Lower lobe of right lung (tissue), 2 donors: ENCODE measurements at regions of chr4 and their contacts with region 1.

Region 1: DNA sequence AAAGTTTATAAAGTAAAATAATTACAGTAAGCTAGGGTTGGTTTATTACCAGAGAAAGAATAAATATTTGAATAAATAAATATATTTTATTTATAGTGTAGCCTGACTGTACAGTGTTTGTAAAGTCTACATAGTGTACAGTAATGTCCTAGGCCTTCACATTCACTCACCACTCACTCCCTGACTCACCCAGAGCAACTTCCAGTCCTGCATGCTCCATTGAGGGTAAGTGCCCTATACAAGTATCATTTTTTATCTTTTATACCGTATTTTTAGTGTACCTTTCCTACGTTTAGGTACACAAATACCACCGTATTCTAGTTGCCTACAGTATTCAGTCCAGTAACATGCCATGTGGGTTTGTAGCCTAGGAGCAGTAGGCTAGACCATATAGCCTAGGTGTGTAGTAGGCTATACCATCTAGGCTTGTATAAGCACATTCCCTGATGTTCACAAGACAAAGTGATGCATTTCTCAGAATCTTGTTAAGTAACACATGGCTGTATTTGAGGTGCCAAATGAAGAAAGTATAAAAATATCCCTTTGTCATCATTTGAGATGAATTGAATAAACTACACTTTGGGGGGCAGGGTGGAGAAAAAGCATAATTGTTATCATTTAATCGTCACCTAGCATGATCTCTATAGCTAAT is 14.7 kb upstream of the KLHL8 start:
- DNase-seq: no peak
- ATAC-seq: peak in 1 of 2 donors; percentile 18
- H3K4me3 ChIP-seq: peak overlapping the region; percentile 47
- H3K27ac ChIP-seq: no peak overlapping the region
- H3K4me1 ChIP-seq: peaks cover 3% of the 10 kb centered on the region
- H3K27me3 ChIP-seq: no peaks in the 10 kb centered on the region
- CTCF ChIP-seq: no peak

Region 2: GRCh38 chr4:87150498-87151261 is 84.5 kb before region 1 on chr4:
- intact Hi-C with region 1: loop called (anchors 10 kb)
- DNase-seq: no peak
- ATAC-seq: peak; percentile 81 to 84
- H3K4me3 ChIP-seq: no peak overlapping the region
- H3K27ac ChIP-seq: no peak overlapping the region
- H3K4me1 ChIP-seq: no peaks in the 10 kb centered on the region
- H3K27me3 ChIP-seq: no peaks in the 10 kb centered on the region
- CTCF ChIP-seq: peak; percentile 93

Region 3: GRCh38 chr4:87179751-87180150 is 55.4 kb before region 1 on chr4:
- intact Hi-C with region 1: no loop called
- DNase-seq: no peak
- ATAC-seq: no peak
- H3K4me3 ChIP-seq: no peak overlapping the region
- H3K27ac ChIP-seq: no peak overlapping the region
- H3K4me1 ChIP-seq: no peaks in the 10 kb centered on the region
- H3K27me3 ChIP-seq: no peaks in the 10 kb centered on the region
- CTCF ChIP-seq: no peak